Activated naive CD4-positive, alpha-beta T cell treated with anti-CD3 and anti-CD28 coated beads for 36 hours (primary cell): ENCODE measurements at regions of chr16 and their contacts with region 1.

Region 1: GRCh38 chr16:1991948-1992703 is 2.4 kb downstream of the SYNGR3 start:
- DNase-seq: peak; percentile 99
- H3K4me3 Mint-ChIP-seq: peak overlapping the region; percentile 65
- H3K27ac Mint-ChIP-seq: no peak overlapping the region
- H3K4me1 Mint-ChIP-seq: peaks cover 24% of the 10 kb centered on the region
- H3K27me3 Mint-ChIP-seq: peaks cover 24% of the 10 kb centered on the region

Region 2: DNA sequence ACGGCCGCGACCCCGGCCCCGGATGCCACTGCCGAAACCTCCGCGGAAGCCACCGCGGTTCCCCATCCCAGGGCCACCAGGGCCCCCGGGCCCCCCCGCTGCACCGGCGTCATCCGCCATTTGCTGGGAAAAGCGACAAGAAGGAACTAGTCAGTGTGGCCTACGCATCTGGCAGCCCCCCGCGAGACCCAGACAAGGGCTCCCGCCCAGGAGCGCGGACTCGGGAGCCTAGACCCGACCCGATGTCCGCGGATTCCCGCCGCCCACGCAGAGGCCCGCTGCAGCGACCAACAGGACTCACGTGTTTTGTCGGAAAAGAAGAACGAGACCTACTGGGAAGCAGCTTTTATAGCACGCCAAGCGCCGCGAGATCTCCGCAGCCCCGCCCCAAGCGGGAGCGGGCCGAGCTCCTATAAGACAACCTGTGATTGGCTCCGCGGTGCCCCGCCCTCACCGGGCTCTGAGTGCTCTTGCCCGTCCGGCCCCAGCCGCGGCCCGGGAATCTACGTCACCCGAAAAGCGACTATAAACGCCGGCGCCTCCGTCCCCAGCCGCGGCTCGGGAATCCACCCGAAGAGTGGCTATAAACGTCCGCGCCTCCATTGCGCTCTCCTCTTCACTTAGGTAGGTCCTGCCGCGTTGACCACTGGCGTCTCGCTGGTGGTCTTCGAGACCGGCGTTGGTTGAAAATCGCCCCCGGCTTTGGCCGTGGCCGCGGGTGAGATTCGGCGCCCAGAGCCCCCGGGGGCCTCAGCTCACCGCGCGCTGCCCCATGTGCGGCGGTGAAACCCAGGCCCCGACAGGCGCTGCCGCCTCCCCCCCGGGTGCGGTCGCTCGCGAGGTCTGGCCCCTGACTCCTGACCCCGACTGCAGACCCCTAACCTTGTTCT is 27.4 kb before region 1 on chr16 and contains the start of gene RPS2:
- CTCF ChIA-PET with region 1: no interaction called
- intact Hi-C with region 1: loop called (anchors 1 kb)
- DNase-seq: peak; percentile 99
- H3K4me3 Mint-ChIP-seq: peak within 1 kb of the TSS; percentile 97
- H3K27ac Mint-ChIP-seq: peak within 1 kb of the TSS; percentile 95
- H3K4me1 Mint-ChIP-seq: peaks cover 42% of the 10 kb centered on the region
- H3K27me3 Mint-ChIP-seq: no peaks in the 10 kb centered on the region
- total RNA-seq, gene RPS2: 7,042 to 7,057 TPM

Region 3: GRCh38 chr16:2003827-2004641 is 11.9 kb after region 1 on chr16:
- CTCF ChIA-PET with region 1: interaction called, 36 read pairs
- intact Hi-C with region 1: loop called (anchors 1 kb)
- DNase-seq: peak; percentile 90
- H3K4me3 Mint-ChIP-seq: no peak overlapping the region
- H3K27ac Mint-ChIP-seq: no peak overlapping the region
- H3K4me1 Mint-ChIP-seq: peaks cover 37% of the 10 kb centered on the region
- H3K27me3 Mint-ChIP-seq: no peaks in the 10 kb centered on the region

Region 4: DNA sequence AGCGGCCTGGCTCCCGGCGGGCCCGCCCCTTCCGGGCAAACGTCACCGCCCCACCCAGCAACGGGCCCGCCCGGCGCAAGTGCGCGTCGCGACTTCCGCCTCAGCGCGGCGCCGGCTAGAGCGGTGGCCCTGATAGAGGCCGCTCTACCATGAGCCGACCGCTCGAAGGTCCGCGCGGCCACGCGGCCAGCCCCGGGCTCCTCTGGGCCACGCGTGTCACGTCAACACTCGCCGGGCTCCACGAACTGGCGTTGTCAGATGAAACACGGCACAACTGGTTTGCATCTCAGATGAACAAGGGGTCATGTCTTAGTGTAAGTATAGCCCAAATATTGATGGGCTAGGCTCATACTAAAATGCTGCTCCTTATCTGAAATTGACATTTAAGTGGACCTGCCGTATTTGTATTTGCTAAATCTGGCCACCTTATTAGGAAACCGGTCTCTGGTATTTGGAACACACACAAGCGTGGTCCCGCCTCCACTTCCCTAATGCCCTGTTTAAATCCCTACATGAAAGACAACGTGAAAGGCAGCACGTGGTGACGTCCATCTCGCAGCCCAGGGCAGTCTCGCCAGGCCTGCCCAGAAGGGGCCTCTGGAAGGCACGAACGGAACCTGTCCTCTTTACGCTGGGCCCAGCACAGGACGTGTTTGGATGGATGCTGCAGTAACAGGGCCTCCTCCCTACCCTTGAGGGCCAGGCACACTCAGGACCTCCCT is 17.8 kb after region 1 on chr16 and contains the start of gene ZNF598:
- CTCF ChIA-PET with region 1: interaction called, 36 read pairs
- intact Hi-C with region 1: loop called (anchors 1 kb)
- DNase-seq: peak; percentile 77
- H3K4me3 Mint-ChIP-seq: peak within 1 kb of the TSS; percentile 88
- H3K27ac Mint-ChIP-seq: peak within 1 kb of the TSS; percentile 89
- H3K4me1 Mint-ChIP-seq: peaks cover 39% of the 10 kb centered on the region
- H3K27me3 Mint-ChIP-seq: no peaks in the 10 kb centered on the region
- total RNA-seq, gene ZNF598: 88.8 to 93.5 TPM

Region 5: GRCh38 chr16:2223375-2224182 is 231.5 kb after region 1 on chr16 and contains the start of gene E4F1:
- CTCF ChIA-PET with region 1: no interaction called
- intact Hi-C with region 1: loop called (anchors 1 kb)
- DNase-seq: peak; percentile 100
- H3K4me3 Mint-ChIP-seq: peak within 1 kb of the TSS; percentile 78
- H3K27ac Mint-ChIP-seq: peak within 1 kb of the TSS; percentile 18
- H3K4me1 Mint-ChIP-seq: peaks cover 22% of the 10 kb centered on the region
- H3K27me3 Mint-ChIP-seq: no peaks in the 10 kb centered on the region
- total RNA-seq, gene E4F1: 21.2 to 21.7 TPM

Region 6: GRCh38 chr16:2317231-2318020 is 325.3 kb after region 1 on chr16:
- CTCF ChIA-PET with region 1: no interaction called
- intact Hi-C with region 1: no loop called
- DNase-seq: no peak
- H3K4me3 Mint-ChIP-seq: no peak overlapping the region
- H3K27ac Mint-ChIP-seq: no peak overlapping the region
- H3K4me1 Mint-ChIP-seq: no peaks in the 10 kb centered on the region
- H3K27me3 Mint-ChIP-seq: no peaks in the 10 kb centered on the region